MCF 10A (cell line): ENCODE measurements at regions of chr5 and their contacts with region 1.

Region 1: GRCh38 chr5:141040771-141041426 is 10.3 kb upstream of the PCDHB1 start:
- DNase-seq: peak; percentile 98
- H3K4me3 Mint-ChIP-seq: no peak overlapping the region
- H3K27ac Mint-ChIP-seq: no peak overlapping the region
- H3K4me1 Mint-ChIP-seq: no peaks in the 10 kb centered on the region
- H3K27me3 Mint-ChIP-seq: peaks cover 31% of the 10 kb centered on the region
- CTCF ChIP-seq: peak; percentile 89

Region 2: DNA sequence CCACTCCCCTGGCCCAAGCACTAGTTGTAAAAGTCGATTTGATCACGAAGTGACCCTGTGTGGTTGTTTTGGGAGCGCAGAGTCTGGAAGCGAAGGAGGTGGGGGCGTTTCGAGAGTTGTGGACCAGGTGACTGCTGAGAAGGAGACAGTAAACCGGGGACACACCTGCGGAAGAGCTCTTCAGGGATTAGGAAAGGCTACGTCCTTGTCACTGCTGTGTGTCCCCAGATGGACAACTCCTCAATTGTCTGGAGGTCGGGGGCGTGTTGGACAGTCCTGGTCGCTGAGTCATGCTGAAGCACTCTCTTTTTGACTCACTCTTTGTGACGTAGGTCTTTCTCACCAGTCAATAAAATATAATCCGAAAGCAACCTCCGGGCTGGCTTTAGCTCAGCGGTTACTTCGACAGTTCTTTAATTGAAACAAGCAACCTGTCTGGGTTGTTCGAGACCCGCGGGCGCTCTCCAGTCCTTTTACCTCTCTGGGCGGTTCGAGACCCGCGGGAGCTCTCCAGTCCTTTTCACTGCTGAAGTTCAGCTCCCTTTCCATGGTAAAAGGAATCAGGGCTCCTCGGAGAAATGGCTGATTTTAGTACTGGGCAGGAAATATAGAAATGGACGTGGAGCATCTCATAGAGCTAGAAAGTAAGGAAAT is 329.9 kb before region 1 on chr5:
- CTCF ChIA-PET with region 1: interaction called, 5 read pairs
- POLR2A ChIA-PET with region 1: interaction called, 32 read pairs
- intact Hi-C with region 1: no loop called
- DNase-seq: peak; percentile 99
- H3K4me3 Mint-ChIP-seq: peak overlapping the region; percentile 88
- H3K27ac Mint-ChIP-seq: peak overlapping the region; percentile 94
- H3K4me1 Mint-ChIP-seq: peaks cover 5% of the 10 kb centered on the region
- H3K27me3 Mint-ChIP-seq: no peaks in the 10 kb centered on the region
- CTCF ChIP-seq: no peak

Region 3: DNA sequence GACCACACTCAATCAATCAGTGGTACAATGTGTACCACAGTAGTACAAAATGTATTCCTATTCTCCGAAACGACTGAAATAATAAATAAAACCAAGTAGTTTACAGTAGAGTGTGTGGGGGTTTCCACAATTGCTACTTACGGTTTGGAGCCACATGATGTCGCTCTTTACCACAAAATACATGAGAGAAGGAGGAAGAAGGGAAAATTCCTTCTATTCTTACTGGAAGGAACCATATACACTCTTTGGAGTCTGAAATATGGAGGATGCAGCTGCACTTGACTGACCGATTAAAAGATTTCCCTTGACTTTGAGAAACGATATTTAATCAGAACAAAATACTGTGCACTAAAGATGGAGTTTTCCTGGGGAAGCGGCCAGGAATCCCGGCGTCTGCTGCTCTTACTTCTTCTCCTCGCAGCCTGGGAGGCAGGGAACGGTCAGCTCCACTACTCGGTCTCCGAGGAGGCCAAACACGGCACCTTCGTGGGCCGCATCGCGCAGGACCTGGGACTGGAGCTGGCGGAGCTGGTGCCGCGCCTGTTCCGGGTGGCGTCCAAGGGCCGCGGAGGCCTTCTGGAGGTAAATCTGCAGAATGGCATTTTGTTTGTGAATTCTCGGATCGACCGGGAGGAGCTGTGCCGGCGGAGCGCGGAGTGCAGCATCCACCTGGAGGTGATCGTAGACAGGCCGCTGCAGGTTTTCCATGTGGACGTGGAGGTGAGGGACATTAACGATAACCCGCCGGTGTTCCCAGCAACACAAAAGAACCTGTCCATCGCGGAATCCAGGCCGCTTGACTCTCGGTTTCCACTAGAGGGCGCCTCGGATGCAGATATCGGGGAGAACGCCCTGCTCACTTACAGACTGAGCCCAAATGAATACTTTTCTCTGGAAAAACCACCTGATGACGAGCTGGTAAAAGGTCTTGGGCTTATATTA is 233.8 kb before region 1 on chr5 and contains the start of gene PCDHA4:
- CTCF ChIA-PET with region 1: interaction called, 61 read pairs
- POLR2A ChIA-PET with region 1: interaction called, 38 read pairs
- intact Hi-C with region 1: loop called (anchors 1 kb)
- DNase-seq: peak; percentile 18
- H3K4me3 Mint-ChIP-seq: peak within 1 kb of the TSS; percentile 55
- H3K27ac Mint-ChIP-seq: no peak within 1 kb of the TSS
- H3K4me1 Mint-ChIP-seq: no peaks in the 10 kb centered on the region
- H3K27me3 Mint-ChIP-seq: no peaks in the 10 kb centered on the region
- CTCF ChIP-seq: peak; percentile 38
- total RNA-seq, gene PCDHA4: 0.16 and 0.49 TPM in 2 replicates

Region 4: GRCh38 chr5:140842798-140843733 is 197.8 kb before region 1 on chr5:
- CTCF ChIA-PET with region 1: interaction called, 8 read pairs
- POLR2A ChIA-PET with region 1: no interaction called
- intact Hi-C with region 1: loop called (anchors 1 kb)
- DNase-seq: no peak
- H3K4me3 Mint-ChIP-seq: no peak overlapping the region
- H3K27ac Mint-ChIP-seq: no peak overlapping the region
- H3K4me1 Mint-ChIP-seq: no peaks in the 10 kb centered on the region
- H3K27me3 Mint-ChIP-seq: no peaks in the 10 kb centered on the region
- CTCF ChIP-seq: no peak

Region 5: DNA sequence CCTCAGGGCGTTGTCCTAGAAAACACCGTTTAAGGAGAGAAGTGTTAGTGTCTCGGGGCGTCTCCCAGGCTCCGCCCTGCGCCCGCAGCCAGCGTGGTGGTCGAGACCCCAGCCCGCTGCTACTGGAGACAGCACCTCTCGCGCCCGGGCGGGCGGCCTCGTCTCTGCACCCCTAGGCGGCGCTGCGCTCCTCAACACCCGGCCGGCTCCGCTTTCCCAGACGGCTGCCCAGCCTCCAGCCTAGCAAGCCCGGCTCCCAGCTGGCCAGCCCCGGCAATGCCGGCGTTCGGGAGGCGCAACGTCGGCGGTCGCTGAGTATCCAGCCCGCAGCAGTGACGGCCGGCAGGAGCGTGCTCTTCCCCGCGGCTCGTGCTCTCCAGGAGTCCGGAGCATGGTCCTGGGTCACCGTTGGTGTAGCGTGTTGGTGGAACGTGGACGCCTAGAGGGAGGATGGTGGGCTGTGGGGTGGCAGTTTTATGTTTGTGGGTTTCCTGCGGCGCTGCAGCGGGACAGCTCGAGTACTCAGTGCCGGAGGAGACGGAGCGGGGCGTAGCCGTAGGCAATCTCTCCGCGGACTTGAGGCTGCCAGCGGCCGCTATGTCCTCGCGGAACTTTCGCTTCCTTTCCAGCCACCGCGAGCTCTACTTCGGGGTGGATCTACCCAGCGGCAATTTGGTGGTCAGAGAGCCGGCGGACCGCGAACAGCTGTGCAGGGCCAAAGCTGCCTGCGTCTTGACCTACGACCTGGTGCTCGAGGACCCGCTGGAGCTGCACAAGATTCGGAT is 114.3 kb before region 1 on chr5:
- CTCF ChIA-PET with region 1: interaction called, 152 read pairs
- POLR2A ChIA-PET with region 1: interaction called, 255 read pairs
- intact Hi-C with region 1: loop called (anchors 1 kb)
- DNase-seq: peak; percentile 92
- H3K4me3 Mint-ChIP-seq: peak overlapping the region; percentile 95
- H3K27ac Mint-ChIP-seq: peak overlapping the region; percentile 85
- H3K4me1 Mint-ChIP-seq: peaks cover 31% of the 10 kb centered on the region
- H3K27me3 Mint-ChIP-seq: no peaks in the 10 kb centered on the region
- CTCF ChIP-seq: peak; percentile 98

Region 6: GRCh38 chr5:140966293-140967225 is 74.3 kb before region 1 on chr5 and contains the start of gene PCDHAC2:
- CTCF ChIA-PET with region 1: interaction called, 10 read pairs
- POLR2A ChIA-PET with region 1: interaction called, 33 read pairs
- intact Hi-C with region 1: no loop called
- DNase-seq: peak; percentile 55
- H3K4me3 Mint-ChIP-seq: peak within 1 kb of the TSS; percentile 94
- H3K27ac Mint-ChIP-seq: peak within 1 kb of the TSS; percentile 90
- H3K4me1 Mint-ChIP-seq: peaks cover 24% of the 10 kb centered on the region
- H3K27me3 Mint-ChIP-seq: no peaks in the 10 kb centered on the region
- CTCF ChIP-seq: no peak
- total RNA-seq, gene PCDHAC2: 9.3 and 12.3 TPM in 2 replicates

Region 7: GRCh38 chr5:141017943-141018342 is 23.0 kb before region 1 on chr5:
- CTCF ChIA-PET with region 1: interaction called, 12 read pairs
- POLR2A ChIA-PET with region 1: interaction called, 11 read pairs
- intact Hi-C with region 1: no loop called
- DNase-seq: no peak
- H3K4me3 Mint-ChIP-seq: no peak overlapping the region
- H3K27ac Mint-ChIP-seq: no peak overlapping the region
- H3K4me1 Mint-ChIP-seq: peaks cover 5% of the 10 kb centered on the region
- H3K27me3 Mint-ChIP-seq: no peaks in the 10 kb centered on the region
- CTCF ChIP-seq: no peak